MCF 10A (cell line): ENCODE measurements at regions of chr9 and their contacts with region 1.

Region 1: GRCh38 chr9:127586537-127586936 is 25.5 kb upstream of the STXBP1 start:
- DNase-seq: peak; percentile 85
- H3K4me3 Mint-ChIP-seq: no peak overlapping the region
- H3K27ac Mint-ChIP-seq: no peak overlapping the region
- H3K4me1 Mint-ChIP-seq: peaks cover 21% of the 10 kb centered on the region
- H3K27me3 Mint-ChIP-seq: no peaks in the 10 kb centered on the region
- CTCF ChIP-seq: peak; percentile 88

Region 2: GRCh38 chr9:126939821-126940221 is 646.7 kb before region 1 on chr9:
- CTCF ChIA-PET with region 1: interaction called, 4 read pairs
- POLR2A ChIA-PET with region 1: no interaction called
- intact Hi-C with region 1: loop called (anchors 5 kb)
- DNase-seq: no peak
- H3K4me3 Mint-ChIP-seq: no peak overlapping the region
- H3K27ac Mint-ChIP-seq: no peak overlapping the region
- H3K4me1 Mint-ChIP-seq: no peaks in the 10 kb centered on the region
- H3K27me3 Mint-ChIP-seq: peaks cover 25% of the 10 kb centered on the region
- CTCF ChIP-seq: no peak

Region 3: DNA sequence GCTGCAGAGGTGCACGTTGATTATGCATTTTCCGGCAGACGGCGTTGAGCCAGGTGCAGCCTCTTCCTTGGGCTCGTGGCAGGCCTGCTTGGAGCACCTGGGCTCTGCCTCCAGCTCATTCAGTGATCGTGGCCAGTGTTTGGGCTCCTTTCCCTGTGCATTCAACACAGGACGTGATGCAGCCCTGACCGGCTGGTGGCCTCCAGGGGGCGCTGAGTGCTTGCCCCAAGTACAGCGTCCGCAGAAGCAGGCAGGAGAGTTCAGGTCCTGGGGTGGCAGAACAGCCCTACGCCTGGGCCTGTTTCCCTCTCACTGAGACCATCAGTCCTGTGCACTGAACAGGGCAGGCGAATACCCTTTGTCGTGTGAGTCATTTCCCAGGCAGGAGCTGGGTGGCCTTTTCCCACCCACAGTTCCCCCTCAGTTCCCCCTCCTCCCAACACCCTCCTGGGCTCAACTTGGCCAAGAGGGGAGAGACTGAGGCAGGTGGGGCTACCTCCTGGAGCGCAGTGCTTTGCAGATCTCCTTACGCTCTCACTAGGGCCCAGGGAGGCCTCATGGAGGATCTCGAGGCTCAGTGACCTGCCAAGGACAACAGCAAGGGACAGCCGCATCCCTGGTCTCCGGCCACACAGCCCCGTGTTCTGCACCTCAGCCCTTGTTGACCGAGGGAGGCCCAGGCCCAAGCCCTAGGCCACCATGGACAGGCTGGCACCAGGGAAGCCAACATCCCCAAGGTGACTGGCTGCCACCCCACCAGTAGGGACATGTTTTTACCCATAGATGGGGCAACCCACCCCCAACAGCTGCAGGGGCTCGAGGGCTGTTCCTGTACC is 82.4 kb before region 1 on chr9:
- CTCF ChIA-PET with region 1: interaction called, 69 read pairs
- POLR2A ChIA-PET with region 1: interaction called, 5 read pairs
- intact Hi-C with region 1: loop called (anchors 1 kb)
- DNase-seq: peak; percentile 73
- H3K4me3 Mint-ChIP-seq: no peak overlapping the region
- H3K27ac Mint-ChIP-seq: peak overlapping the region; percentile 12
- H3K4me1 Mint-ChIP-seq: no peaks in the 10 kb centered on the region
- H3K27me3 Mint-ChIP-seq: no peaks in the 10 kb centered on the region
- CTCF ChIP-seq: peak; percentile 76

Region 4: GRCh38 chr9:127561619-127562500 is 24.7 kb before region 1 on chr9:
- CTCF ChIA-PET with region 1: interaction called, 12 read pairs
- POLR2A ChIA-PET with region 1: interaction called, 58 read pairs
- intact Hi-C with region 1: loop called (anchors 2 kb)
- DNase-seq: peak; percentile 99
- H3K4me3 Mint-ChIP-seq: peak overlapping the region; percentile 72
- H3K27ac Mint-ChIP-seq: peak overlapping the region; percentile 87
- H3K4me1 Mint-ChIP-seq: peaks cover 39% of the 10 kb centered on the region
- H3K27me3 Mint-ChIP-seq: no peaks in the 10 kb centered on the region
- CTCF ChIP-seq: no peak

Region 5: DNA sequence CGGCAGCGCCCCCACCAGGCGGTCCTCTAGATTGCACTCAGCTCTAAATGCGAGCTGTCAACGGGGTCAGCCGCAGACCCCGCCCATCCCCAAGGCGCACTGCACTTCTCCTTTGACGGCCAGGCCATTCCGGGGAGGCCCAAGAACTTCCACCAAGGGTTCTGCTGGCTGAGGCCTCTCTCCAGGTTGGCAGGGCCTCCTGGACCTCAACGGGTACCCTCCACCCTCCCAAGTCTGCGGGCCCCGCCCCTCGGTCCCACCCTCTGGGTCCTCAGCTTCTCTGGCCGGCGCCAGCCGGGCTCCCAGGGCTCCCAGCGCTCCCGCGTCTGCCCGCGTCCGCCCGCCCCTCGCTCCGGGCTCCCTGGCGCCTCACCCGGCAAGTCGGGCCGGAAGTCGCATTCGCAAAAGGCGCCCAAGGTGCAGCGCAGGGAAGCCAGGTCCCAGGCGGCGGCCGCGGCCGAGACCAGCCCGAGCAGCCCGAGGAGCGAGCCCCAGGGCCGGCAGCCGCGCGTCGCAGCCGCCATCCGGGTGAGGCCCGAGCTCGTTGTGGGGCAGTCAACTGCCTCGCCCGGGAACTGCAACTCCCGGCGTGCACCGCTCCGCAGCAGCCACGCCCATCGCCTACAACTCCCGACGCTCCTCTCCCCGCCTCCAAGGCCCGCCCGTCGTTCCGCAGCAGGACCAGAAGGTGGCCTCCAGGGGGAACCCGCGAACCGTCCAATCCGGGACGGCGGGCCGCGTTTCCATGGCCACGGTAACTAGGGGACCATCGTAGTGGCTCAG is 148.4 kb after region 1 on chr9 and contains the start of gene TOR2A:
- CTCF ChIA-PET with region 1: interaction called, 53 read pairs
- POLR2A ChIA-PET with region 1: interaction called, 9 read pairs
- intact Hi-C with region 1: loop called (anchors 1 kb)
- DNase-seq: peak; percentile 96
- H3K4me3 Mint-ChIP-seq: peak within 1 kb of the TSS; percentile 74
- H3K27ac Mint-ChIP-seq: peak within 1 kb of the TSS; percentile 22
- H3K4me1 Mint-ChIP-seq: no peaks in the 10 kb centered on the region
- H3K27me3 Mint-ChIP-seq: no peaks in the 10 kb centered on the region
- CTCF ChIP-seq: peak; percentile 96
- total RNA-seq, gene TOR2A: 8.4 and 11.3 TPM in 2 replicates

Region 6: DNA sequence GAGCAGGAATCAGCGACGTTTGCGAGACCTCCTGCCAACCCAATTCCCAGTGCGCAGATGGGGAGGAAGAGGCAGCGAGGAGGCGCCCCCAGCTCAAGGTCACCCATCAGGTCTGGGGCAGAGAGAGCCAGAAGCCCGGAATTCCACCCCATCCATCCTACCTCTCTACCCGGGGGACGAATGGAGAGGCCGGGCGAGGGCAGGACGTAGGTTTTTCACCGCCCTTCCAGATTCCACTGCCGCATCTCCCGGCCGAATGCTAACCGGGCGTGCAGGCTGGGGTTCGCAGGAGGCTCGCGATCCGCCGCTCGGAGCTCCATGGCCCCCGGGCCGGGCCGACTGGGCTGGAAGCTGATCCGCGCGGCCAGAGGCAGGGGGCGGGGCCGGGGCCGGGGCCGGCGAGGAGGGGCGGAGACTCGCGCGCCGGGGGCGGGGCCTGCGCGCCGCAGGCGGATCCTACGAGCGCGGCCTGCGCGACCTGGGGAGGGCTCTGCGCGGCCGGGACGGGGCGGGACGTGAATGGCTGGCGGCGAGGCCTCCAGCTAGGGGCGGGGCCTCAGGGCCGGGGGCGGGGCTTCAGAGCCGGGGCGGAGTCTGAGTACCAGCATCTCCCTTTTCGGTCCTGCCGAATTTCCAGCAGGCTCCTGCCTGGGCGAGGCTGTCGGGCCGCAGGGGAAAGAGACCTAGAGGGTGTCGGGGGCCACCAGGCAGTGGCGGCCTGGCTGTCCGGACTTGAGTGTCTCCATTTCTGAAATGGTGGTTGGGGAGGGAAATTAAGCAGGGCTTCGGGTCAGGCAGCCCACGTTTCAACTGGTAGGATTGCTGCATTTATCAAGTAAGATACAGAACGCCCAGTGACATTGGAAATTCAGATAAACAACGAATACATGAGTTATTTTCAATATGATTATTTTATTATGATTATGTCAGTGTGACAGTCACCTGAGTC is 330.4 kb after region 1 on chr9 and contains the start of gene ST6GALNAC4:
- CTCF ChIA-PET with region 1: interaction called, 51 read pairs
- POLR2A ChIA-PET with region 1: interaction called, 5 read pairs
- intact Hi-C with region 1: loop called (anchors 1 kb)
- DNase-seq: peak; percentile 79
- H3K4me3 Mint-ChIP-seq: peak within 1 kb of the TSS; percentile 74
- H3K27ac Mint-ChIP-seq: peak within 1 kb of the TSS; percentile 93
- H3K4me1 Mint-ChIP-seq: peaks cover 27% of the 10 kb centered on the region
- H3K27me3 Mint-ChIP-seq: no peaks in the 10 kb centered on the region
- CTCF ChIP-seq: no peak
- total RNA-seq, gene ST6GALNAC4: 36.3 and 39.5 TPM in 2 replicates